Activated T-helper 1 cell treated with anti-CD3 and anti-CD28 coated beads, Interleukin-12 subunit alpha, Interleukin-12 subunit beta, Interleukin-2, Interleukin-4 antibody, amounts not matched to agents 30 ng/mL and 10 ng/mL and 1 ng/mL, durations not matched to agents 14 hours and 24 hours and 36 hours (primary cell): ENCODE measurements at regions of chr1 and their contacts with region 1.

Region 1: GRCh38 chr1:150429805-150430204 is 57.4 kb upstream of the TARS2 start:
- DNase-seq: no peak
- H3K4me3 Mint-ChIP-seq: no peak overlapping the region
- H3K27ac Mint-ChIP-seq: peak overlapping the region; percentile 3
- H3K4me1 Mint-ChIP-seq: peaks cover 4% of the 10 kb centered on the region
- H3K27me3 Mint-ChIP-seq: no peaks in the 10 kb centered on the region

Region 2: GRCh38 chr1:150363426-150364230 is 66.2 kb before region 1 on chr1 and contains the start of gene RPRD2:
- intact Hi-C with region 1: loop called (anchors 5 kb)
- DNase-seq: peak; percentile 99
- H3K4me3 Mint-ChIP-seq: peak within 1 kb of the TSS; percentile 99
- H3K27ac Mint-ChIP-seq: peak within 1 kb of the TSS; percentile 97
- H3K4me1 Mint-ChIP-seq: peaks cover 41% of the 10 kb centered on the region
- H3K27me3 Mint-ChIP-seq: no peaks in the 10 kb centered on the region
- total RNA-seq, gene RPRD2: 24.4 and 24.7 TPM in 2 replicates

Region 3: DNA sequence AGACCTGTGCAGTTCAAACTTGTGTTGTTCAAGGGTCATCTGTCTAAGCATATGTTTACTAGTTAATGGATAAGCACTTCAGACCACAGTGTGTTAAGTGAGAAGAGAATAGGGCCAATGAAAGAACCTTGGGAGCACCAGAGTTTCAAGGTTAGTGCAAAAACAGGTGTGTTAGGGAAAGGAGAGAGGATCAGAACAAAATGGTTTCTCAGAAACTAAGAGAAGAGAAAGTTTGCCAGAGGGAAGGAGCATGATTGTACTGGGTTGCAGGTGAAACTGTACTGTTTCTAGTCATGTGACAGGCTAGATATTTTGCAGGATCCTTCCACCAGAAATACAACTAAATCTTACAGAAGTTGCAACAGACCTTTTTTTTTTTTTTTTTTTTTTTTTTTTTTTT is 42.6 kb before region 1 on chr1:
- intact Hi-C with region 1: no loop called
- DNase-seq: no peak
- H3K4me3 Mint-ChIP-seq: no peak overlapping the region
- H3K27ac Mint-ChIP-seq: no peak overlapping the region
- H3K4me1 Mint-ChIP-seq: peaks cover 34% of the 10 kb centered on the region
- H3K27me3 Mint-ChIP-seq: no peaks in the 10 kb centered on the region